Cardiac septum (tissue), 1 donor: ENCODE measurements at regions of chrX and their contacts with region 1.

Region 1: GRCh38 chrX:151151665-151152267 is 24.6 kb upstream of the GPR50 start:
- DNase-seq: no peak

Region 2: GRCh38 chrX:150007356-150007755 is 1144.4 kb before region 1 on chrX:
- intact Hi-C with region 1: no loop called
- DNase-seq: no peak

Region 3: GRCh38 chrX:150990890-150991289 is 160.9 kb before region 1 on chrX:
- intact Hi-C with region 1: no loop called
- DNase-seq: no peak

Region 4: GRCh38 chrX:151239756-151240155 is 88.0 kb after region 1 on chrX:
- intact Hi-C with region 1: no loop called
- DNase-seq: no peak

Region 5: GRCh38 chrX:151359931-151360871 is 208.4 kb after region 1 on chrX:
- intact Hi-C with region 1: loop called (anchors 10 kb)
- DNase-seq: no peak

Region 6: DNA sequence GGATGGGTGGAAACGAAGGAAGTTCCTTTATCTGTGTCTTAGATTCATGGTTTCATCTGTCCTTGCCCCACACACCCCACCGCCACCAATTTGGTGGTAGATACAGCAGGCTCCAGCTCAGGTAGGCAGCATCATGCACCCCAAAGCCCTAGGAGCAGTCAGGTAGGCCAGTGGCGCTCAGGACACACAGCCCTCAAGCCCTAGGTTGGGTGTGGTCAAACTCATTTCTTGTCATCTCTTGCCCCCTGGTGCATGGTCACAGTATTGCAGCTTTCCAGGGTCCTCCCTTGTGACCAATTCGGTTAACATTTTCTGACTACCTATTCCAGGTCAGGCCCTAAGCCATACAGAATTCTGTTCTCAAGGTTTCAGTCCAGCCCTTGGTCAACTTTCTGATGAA is 529.0 kb after region 1 on chrX:
- intact Hi-C with region 1: loop called (anchors 2 kb)
- DNase-seq: no peak